ENCODE measurements at regions of chr4 and their contacts with region 1.

Region 1: DNA sequence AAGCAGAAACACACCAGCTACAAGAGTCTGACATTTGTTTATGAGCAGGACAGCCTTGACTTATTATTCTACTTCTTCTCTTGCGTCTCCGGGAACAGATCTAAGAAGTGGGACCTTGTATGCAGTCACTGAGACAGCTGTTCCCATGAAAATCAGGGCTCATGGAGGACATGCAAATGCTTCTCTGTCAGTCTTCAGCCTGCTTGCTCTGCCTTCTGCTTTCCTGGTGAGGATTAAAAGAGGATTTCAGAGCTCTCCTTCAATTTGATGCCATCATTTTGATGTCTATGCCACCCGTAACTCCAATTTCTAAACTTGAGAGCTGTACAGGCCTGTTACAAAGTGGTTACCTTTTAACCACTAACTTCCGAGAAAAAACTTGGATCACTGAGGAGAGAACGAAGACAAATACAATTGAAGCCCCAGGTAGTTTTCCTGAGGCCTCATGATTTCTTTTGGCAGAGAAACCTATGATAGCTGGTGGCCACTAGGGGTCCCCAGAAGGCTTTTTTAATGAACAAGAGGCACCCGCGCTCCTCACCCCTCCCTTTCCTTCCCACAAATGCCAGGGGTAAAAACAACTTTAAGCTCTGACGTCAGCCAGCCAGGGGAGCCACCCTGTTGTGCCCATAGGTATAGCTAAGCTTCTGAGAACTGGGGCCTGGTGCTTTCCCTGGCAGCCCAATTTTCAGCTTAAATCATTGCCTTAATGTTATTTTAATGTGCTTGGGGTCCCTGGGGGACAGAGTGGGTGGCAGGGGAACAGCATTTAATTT is 97.0 kb downstream of the DDIT4L start:
- DNase-seq: peak; percentile 90
- ATAC-seq: peak; percentile 96
- H3K4me3 Mint-ChIP-seq: no peak overlapping the region
- H3K27ac Mint-ChIP-seq: peak overlapping the region; percentile 66
- H3K4me1 Mint-ChIP-seq: peaks cover 36% of the 10 kb centered on the region
- H3K27me3 Mint-ChIP-seq: peaks cover 4% of the 10 kb centered on the region

Region 2: DNA sequence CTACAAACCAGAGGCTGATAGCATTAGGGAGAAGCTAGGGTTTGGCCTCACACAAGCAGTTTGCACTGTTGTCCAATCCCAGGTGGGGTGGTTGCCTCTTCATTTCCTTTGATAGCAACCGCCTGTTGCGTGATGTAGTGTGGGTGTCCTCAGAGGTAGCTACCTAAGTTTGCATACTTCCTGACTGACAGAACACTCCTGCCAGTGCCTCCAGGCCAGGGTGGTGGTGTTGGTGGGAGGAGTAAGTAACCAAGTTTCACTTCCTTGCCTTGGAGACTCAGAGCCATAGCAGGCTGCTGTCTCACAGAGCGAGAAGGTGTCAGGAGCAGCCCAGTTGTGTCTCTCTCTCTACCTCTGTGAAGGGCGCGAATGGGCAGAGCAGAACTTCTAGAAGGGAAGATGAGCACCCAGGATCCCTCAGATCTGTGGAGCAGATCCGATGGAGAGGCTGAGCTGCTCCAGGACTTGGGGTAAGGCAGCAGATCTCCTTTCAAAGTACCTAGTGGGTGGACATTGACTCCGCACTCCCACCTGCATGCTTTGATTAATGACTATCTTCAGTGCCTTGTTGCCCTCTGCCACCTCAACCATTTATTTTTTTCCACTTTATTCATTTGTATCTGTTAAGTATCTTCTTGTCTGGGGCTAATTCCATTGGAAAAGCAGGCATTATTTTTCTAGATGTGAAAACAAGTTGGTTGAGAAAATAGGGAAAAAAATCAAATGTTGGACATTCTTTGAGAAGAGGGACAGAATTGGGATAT is 276.6 kb before region 1 on chr4 and contains the start of gene DAPP1:
- CTCF ChIA-PET with region 1: no interaction called
- DNase-seq: peak; percentile 93
- ATAC-seq: peak; percentile 97
- H3K4me3 Mint-ChIP-seq: peak within 1 kb of the TSS; percentile 77
- H3K27ac Mint-ChIP-seq: peak within 1 kb of the TSS; percentile 91
- H3K4me1 Mint-ChIP-seq: peaks cover 75% of the 10 kb centered on the region
- H3K27me3 Mint-ChIP-seq: no peaks in the 10 kb centered on the region
- total RNA-seq, gene DAPP1: 24.6 to 25.3 TPM

Region 3: DNA sequence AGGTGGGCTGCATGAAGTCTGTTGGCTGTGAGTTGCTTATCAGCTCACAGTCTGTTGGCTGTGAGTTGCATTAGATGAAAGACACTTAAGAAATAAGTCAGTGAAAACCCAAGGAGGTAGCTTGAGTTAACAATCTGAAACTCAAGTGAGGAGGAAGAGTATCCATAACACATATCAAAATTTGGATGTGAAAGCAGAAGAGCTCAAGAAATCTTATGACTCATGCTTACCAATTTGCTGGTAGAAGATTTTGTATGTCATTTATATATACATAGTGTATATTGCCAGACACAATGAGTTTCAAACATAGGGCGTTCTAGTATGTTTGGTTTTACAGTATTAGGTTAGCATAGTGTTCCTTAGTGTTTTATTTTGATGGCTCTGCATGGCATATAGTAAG is 10.4 kb before region 1 on chr4:
- CTCF ChIA-PET with region 1: interaction called, 10 read pairs
- DNase-seq: no peak
- ATAC-seq: no peak
- H3K4me3 Mint-ChIP-seq: no peak overlapping the region
- H3K27ac Mint-ChIP-seq: no peak overlapping the region
- H3K4me1 Mint-ChIP-seq: peaks cover 19% of the 10 kb centered on the region
- H3K27me3 Mint-ChIP-seq: no peaks in the 10 kb centered on the region

Region 4: DNA sequence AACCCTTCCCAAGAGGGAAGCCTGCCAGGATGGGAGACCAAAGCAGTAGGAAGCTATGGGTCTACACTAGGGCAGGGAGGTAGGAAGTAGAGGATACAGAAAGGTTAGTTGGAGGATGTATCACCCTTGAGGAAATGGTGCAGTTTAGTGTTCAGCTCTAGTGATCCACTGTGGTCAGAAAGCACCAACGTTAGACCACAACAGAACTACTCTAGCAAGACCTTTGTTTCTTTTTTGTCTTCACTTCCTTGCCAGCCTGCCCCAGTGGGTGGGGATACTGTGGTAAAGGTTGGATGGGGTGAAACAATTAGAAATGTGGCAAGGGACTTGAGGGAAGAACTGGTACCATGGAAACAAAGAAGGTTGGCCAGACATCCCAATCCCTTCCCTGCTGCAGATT is 13.7 kb after region 1 on chr4:
- CTCF ChIA-PET with region 1: interaction called, 20 read pairs
- DNase-seq: peak; percentile 83
- ATAC-seq: peak; percentile 96
- H3K4me3 Mint-ChIP-seq: peak overlapping the region; percentile 14
- H3K27ac Mint-ChIP-seq: peak overlapping the region; percentile 85
- H3K4me1 Mint-ChIP-seq: peaks cover 39% of the 10 kb centered on the region
- H3K27me3 Mint-ChIP-seq: no peaks in the 10 kb centered on the region

Measured in activated CD8-positive, alpha-beta memory T cell treated with anti-CD3 and anti-CD28 coated beads, Interleukin-2, amount 10 ng/mL, durations not matched to agents 7 days and 5 days (primary cell).